ENCODE measurements at regions of chr15 and their contacts with region 1.

Region 1: DNA sequence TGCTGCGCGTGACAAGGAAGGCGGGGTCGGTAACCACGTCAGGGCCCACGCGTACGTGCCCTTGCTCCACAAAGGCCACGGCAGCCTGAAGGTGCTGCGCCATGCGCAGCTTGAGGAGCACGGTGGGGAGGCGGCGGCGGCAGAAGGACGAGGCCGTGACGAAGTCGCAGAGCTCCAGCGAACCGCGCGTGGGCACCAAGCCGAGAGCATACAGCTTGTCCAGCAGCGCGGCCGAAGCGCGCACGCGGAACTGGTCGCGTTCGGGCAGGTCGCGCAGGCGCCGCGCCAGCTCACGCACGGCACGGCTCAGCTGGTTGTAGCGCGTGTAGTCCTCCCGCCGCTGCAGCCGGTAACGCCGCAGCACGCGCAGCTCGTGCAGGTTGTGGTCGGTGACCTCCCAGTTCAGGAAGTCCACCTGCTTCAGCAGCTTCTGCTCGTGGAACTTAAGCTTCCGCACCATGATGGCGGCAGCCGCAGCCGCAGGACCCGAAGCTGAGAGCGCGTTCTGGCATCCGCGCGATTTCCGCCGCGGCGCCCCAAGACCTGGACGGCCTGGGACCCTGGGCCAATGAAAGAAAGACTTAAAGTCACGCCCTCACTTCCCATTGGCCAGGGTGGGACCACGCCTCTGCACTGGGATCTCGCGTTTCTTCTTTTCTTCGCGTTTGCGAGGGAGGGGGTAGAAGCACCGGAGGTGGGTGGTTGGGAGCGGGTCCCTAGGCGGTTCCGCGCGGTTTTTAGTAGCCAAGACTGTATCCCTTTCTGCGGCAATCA is at the start of gene IMP3:
- DNase-seq: peak; percentile 96
- H3K4me3 ChIP-seq: peak within 1 kb of the TSS; percentile 61
- H3K27ac ChIP-seq: peak within 1 kb of the TSS; percentile 90
- H3K4me1 ChIP-seq: peaks cover 10% of the 10 kb centered on the region
- H3K27me3 ChIP-seq: no peaks in the 10 kb centered on the region
- CTCF ChIP-seq: no peak
- total RNA-seq, gene IMP3: 55.3 to 94.6 TPM

Region 2: DNA sequence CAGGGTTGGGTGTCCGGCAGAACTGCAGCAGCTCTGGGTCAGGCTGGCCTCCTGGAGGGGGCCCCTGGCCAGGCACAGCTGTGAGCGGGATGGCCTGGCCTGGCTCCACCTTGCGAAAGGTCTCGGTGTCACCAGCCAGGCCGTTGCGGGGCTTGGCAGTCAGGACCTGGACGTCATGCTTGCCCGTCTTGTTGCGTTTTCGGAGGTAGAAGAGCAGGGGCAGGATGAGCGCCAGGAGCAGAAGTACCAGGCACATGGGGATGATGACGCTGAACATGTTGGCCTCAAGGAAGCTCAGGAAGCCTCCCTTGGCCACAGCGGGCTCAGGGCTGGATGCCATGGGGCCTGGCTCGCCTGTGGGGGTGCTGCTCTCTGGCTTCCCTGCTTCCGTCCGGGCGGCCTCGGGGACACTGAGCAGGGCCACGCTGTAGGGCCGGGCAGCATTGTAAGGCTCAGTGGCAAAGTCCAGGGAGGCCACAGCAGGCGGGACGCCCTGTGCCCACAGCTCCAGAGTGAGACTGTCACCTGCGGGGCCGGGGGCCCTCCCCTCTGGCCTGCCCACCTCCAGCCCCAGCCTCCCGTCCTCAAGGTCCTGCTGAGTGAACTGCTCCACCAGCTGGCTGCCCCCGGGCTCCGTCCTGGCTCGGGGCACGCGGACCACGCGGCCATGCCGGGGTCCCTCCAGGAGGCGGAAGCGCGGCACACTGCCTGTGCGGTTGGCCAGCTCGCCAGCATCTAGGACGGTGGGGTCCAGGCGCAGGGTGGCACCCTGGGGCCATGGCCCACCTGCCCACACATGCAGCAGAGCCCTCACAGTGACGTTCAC is 35.9 kb after region 1 on chr15:
- intact Hi-C with region 1: loop called (anchors 5 kb)
- DNase-seq: no peak
- H3K4me3 ChIP-seq: no peak overlapping the region
- H3K27ac ChIP-seq: no peak overlapping the region
- H3K4me1 ChIP-seq: no peaks in the 10 kb centered on the region
- H3K27me3 ChIP-seq: no peaks in the 10 kb centered on the region
- CTCF ChIP-seq: no peak

Measured in colonic mucosa (tissue), 4 donors.